Endothelial cell of umbilical vein (primary cell): ENCODE measurements at regions of chr7 and their contacts with region 1.

Region 1: DNA sequence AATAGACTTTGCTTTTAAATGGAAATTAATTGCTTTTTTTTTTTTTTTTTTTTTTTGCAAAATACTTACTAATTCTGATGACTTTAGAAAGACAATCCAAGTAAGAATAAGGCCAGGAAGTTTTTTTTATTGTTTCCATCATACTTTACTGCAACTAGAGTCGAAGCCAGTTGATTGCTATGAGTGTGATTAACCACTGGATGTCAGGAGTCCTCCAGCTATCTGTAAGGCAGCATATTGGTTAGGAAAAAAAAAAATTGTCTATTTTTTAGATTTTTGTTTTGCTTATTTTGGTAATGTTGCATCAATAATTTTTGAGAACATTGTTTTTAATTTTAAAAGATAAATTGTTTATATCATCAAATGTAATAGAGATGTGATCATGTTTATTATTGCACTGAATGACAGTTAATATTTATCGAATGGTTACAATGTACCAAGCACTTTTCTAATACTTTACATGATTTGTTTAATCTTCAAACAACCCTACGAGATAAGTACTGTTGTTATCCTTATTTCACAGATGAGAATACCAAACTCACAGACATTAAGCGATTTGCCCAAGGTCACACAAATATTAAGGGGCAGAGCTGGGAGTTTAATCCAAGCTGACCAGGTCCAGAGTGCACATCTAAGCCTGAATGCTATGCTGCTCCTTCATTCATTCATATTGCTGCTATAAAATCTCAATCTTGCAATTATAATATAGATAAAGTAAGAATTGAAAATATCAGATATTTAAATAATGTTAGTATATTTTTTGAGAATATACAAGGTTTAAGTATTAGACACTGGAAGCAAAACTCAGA is 19.9 kb upstream of the LMOD2 start:
- DNase-seq: peak; percentile 64
- H3K4me3 ChIP-seq: no peak overlapping the region
- H3K27ac ChIP-seq: peak overlapping the region; percentile 18
- H3K4me1 ChIP-seq: peaks cover 28% of the 10 kb centered on the region
- H3K27me3 ChIP-seq: no peaks in the 10 kb centered on the region
- CTCF ChIP-seq: peak; percentile 44 to 52
- POLR2A ChIP-seq: no peak

Region 2: DNA sequence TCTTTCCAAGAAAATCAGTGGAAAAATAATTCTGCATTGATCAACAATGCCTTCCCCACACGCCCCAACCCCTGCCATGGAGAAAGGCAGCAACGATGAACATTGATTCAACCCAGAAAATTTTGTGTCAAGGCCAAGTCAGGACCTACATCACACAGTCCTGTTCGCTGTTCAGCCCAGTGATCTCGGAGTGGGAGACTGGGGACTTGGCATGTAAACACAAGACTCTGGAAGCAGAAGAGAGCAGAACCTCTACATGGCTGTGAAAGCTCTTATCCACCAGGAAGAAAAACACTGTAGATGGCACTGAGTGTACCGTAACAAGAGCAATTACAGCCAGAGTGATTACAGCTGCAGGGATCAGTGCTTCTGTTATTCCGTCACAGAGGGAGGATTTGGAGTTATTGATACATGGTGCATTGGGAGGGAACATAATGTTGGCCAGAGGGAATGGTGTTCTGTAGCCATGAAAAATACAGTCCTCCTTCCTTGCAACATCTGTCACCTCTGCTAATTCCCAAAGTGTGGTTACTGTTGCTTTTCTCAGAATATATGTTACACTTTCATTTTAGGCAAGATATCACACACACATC is 237.9 kb before region 1 on chr7:
- CTCF ChIA-PET with region 1: no interaction called
- POLR2A ChIA-PET with region 1: no interaction called
- dilution Hi-C with region 1: no loop called
- intact Hi-C with region 1: no loop called
- DNase-seq: no peak
- H3K4me3 ChIP-seq: no peak overlapping the region
- H3K27ac ChIP-seq: no peak overlapping the region
- H3K4me1 ChIP-seq: no peaks in the 10 kb centered on the region
- H3K27me3 ChIP-seq: no peaks in the 10 kb centered on the region
- CTCF ChIP-seq: no peak
- POLR2A ChIP-seq: no peak

Region 3: DNA sequence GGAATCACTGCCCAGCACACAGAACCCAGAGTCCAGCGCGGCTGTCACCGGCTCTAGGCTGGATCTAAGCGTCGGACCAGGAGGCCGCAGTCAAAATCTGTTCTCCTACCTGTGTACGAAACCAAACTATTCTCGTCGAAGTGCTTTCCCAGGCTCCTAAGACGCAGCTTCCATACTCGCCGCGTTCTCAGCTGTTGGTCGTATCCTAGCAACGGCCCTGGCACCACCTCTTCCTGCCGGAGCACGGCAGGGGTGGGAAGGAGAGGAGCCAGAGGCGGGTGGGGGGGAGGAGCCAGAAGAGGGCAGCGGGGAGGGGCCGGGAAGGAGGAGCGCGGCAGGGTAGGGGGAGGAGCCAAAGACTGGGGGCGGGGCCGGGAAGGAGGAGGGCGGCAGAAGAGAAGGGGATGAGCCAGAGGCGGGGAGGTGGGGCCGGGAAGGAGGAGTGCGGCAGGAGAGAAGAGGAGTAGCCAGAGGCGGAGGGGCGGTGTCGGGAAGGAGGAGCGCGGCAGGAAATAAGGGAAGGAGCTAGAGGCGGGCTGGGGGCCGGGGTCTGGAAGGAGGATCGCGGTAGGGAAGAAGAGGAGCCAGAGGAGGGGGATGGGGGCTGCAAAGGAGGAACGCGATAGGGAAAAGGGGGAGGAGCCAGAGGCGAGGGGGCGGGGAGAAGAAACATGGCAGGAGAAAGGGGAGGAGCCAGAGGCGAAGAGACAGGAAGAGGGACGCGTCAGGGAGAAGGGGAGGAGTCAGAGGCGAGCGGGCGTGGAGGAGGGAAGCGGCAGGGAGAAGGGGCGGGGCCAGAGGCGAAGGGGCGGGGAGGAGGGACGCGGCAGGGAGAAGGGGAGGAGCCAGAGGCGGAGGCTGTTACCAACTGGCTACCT is 101.1 kb before region 1 on chr7 and contains the start of gene IQUB:
- CTCF ChIA-PET with region 1: no interaction called
- POLR2A ChIA-PET with region 1: no interaction called
- dilution Hi-C with region 1: no loop called
- intact Hi-C with region 1: loop called (anchors 1 kb)
- DNase-seq: peak; percentile 95
- H3K4me3 ChIP-seq: peak within 1 kb of the TSS; percentile 61 to 81 (median 80)
- H3K27ac ChIP-seq: peak within 1 kb of the TSS; percentile 74
- H3K4me1 ChIP-seq: peaks cover 27% of the 10 kb centered on the region
- H3K27me3 ChIP-seq: peaks cover 6 to 13% of the 10 kb centered on the region in 2 experiments
- CTCF ChIP-seq: no peak
- POLR2A ChIP-seq: no peak
- total RNA-seq, gene IQUB: not detected in 2 replicates

Region 4: GRCh38 chr7:123682690-123683089 is 46.9 kb after region 1 on chr7:
- CTCF ChIA-PET with region 1: interaction called, 54 read pairs
- POLR2A ChIA-PET with region 1: no interaction called
- dilution Hi-C with region 1: no loop called
- intact Hi-C with region 1: loop called (anchors 1 kb)
- DNase-seq: peak; percentile 72
- H3K4me3 ChIP-seq: no peak overlapping the region
- H3K27ac ChIP-seq: no peak overlapping the region
- H3K4me1 ChIP-seq: no peaks in the 10 kb centered on the region
- H3K27me3 ChIP-seq: no peaks in the 10 kb centered on the region
- CTCF ChIP-seq: peak; percentile 25 to 41
- POLR2A ChIP-seq: no peak

Region 5: GRCh38 chr7:123797673-123798527 is 162.1 kb after region 1 on chr7:
- CTCF ChIA-PET with region 1: interaction called, 25 read pairs
- POLR2A ChIA-PET with region 1: no interaction called
- dilution Hi-C with region 1: no loop called
- intact Hi-C with region 1: loop called (anchors 1 kb)
- DNase-seq: peak; percentile 82
- H3K4me3 ChIP-seq: no peak overlapping the region
- H3K27ac ChIP-seq: no peak overlapping the region
- H3K4me1 ChIP-seq: peaks cover 7% of the 10 kb centered on the region
- H3K27me3 ChIP-seq: no peaks in the 10 kb centered on the region
- CTCF ChIP-seq: peak in 1 of 2 donors; percentile 31
- POLR2A ChIP-seq: no peak

Region 6: DNA sequence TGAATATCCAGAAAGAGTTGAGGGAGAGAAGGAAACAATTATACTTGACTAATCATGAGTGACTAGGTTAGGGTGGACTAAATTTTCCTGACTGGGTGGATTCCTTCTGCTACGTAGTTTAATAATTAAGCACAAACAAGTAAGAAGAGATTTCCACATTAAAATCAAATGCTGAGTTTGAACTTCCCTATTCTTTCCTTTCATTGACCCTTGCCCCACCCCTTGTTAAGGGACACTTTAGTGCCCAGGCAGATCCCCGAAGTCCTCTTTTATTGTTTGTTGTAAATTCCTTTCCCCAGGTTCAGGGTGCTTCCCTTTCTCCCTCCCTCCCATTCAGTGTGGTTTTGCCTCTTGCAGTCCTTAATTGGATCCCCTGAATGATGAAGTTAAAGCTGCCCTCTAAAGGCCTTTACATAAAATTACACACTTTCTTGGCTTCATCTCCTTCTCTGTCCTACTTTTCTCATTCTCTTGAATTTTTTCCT is 280.5 kb after region 1 on chr7:
- CTCF ChIA-PET with region 1: no interaction called
- POLR2A ChIA-PET with region 1: no interaction called
- dilution Hi-C with region 1: no loop called
- intact Hi-C with region 1: loop called (anchors 5 kb)
- DNase-seq: peak; percentile 28
- H3K4me3 ChIP-seq: no peak overlapping the region
- H3K27ac ChIP-seq: no peak overlapping the region
- H3K4me1 ChIP-seq: no peaks in the 10 kb centered on the region
- H3K27me3 ChIP-seq: peaks cover 0 to 2% of the 10 kb centered on the region in 2 experiments
- CTCF ChIP-seq: peak in 1 of 2 donors; percentile 15
- POLR2A ChIP-seq: no peak

Region 7: GRCh38 chr7:124784879-124785818 is 1149.4 kb after region 1 on chr7:
- CTCF ChIA-PET with region 1: no interaction called
- POLR2A ChIA-PET with region 1: no interaction called
- dilution Hi-C with region 1: no loop called
- intact Hi-C with region 1: loop called (anchors 2 kb)
- DNase-seq: peak; percentile 76
- H3K4me3 ChIP-seq: no peak overlapping the region
- H3K27ac ChIP-seq: no peak overlapping the region
- H3K4me1 ChIP-seq: peaks cover 14% of the 10 kb centered on the region
- H3K27me3 ChIP-seq: peaks cover 0 to 4% of the 10 kb centered on the region in 2 experiments
- CTCF ChIP-seq: peak; percentile 77 to 84
- POLR2A ChIP-seq: no peak